Posterior vena cava (tissue), 2 donors: ENCODE measurements at regions of chr4 and their contacts with region 1.

Region 1: DNA sequence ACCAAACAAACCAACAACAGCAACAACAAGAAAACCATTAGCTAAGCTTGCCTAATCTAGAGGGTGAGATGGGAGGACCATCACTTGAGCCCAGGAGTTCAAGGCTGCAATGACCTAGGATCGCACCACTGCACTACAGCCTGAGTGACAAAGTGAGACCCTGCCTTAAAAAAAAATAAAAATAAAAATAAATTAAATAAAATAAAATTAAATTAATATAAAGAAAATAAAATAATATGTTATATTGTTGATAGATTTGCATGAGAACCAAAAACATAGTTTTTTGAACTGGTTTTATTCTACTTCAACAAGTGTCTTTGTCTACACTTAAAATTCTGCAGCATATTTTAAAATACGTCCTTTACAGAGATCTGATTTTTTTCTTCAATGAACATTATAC is 2683.1 kb downstream of the ARAP2 start:
- DNase-seq: no peak

Region 2: GRCh38 chr4:33551244-33551643 is 10.0 kb before region 1 on chr4:
- intact Hi-C with region 1: loop called in 1 of 2 experiments (anchors 1 kb)
- DNase-seq: no peak